ENCODE measurements at regions of chr15 and their contacts with region 1.

Region 1: DNA sequence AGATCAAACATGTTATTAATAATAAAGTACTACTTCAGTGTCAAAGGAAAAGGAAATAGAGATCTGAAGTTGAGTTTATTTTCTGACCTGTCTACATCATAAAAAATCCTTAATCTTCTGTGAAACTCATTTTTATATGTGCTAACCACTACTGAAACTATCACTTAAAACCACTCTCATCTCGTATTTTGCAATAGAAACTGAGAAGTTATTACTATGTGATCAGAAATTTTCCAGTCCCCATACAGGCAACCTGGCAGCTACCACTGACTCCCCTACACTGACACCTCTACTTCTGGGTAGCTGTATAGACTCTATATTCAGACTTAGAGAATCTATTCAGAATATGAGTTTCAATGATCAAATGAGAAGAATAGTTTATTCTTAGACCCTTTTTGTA is 8.3 kb downstream of the HDGFL3 start:
- DNase-seq: no peak
- ATAC-seq: no peak
- H3K4me3 ChIP-seq: no peak overlapping the region
- H3K27ac ChIP-seq: no peak overlapping the region
- H3K4me1 ChIP-seq: peaks cover 0 to 62% (median 21%) of the 10 kb centered on the region in 12 donors
- H3K27me3 ChIP-seq: no peaks in the 10 kb centered on the region
- CTCF ChIP-seq: no peak
- POLR2A ChIP-seq: no peak

Region 2: GRCh38 chr15:83129791-83130190 is 69.5 kb before region 1 on chr15:
- intact Hi-C with region 1: loop called in 1 of 10 experiments (anchors 10 kb)
- DNase-seq: no peak
- ATAC-seq: no peak
- H3K4me3 ChIP-seq: no peak overlapping the region
- H3K27ac ChIP-seq: no peak overlapping the region
- H3K4me1 ChIP-seq: peaks cover 0 to 5% (median 0%) of the 10 kb centered on the region in 12 donors
- H3K27me3 ChIP-seq: no peaks in the 10 kb centered on the region
- CTCF ChIP-seq: no peak
- POLR2A ChIP-seq: no peak

Region 3: DNA sequence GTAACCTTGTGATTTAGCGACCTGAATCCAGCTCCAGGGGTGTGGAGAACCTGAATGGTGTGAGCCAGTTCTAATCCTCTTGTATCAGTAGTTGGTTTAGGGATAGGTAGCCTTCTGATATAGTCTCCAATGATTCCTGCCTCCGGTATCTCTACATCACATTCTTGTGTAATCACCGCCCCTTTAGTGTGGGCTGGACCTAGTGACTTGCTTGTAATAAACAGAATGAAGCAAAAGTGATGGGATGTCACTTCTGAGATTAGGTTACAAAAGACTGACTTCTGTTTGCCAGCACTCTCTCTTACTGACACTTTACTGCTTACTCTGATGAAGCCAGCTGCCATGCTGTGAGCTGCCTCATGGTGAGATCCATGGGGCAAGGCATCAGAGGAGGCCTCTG is 55.1 kb before region 1 on chr15:
- intact Hi-C with region 1: loop called in 2 of 10 experiments (anchors 10 kb)
- DNase-seq: no peak
- ATAC-seq: no peak
- H3K4me3 ChIP-seq: no peak overlapping the region
- H3K27ac ChIP-seq: no peak overlapping the region
- H3K4me1 ChIP-seq: no peaks in the 10 kb centered on the region
- H3K27me3 ChIP-seq: no peaks in the 10 kb centered on the region
- CTCF ChIP-seq: no peak
- POLR2A ChIP-seq: no peak